PC-9 (cell line): ENCODE measurements at regions of chr17 and their contacts with region 1.

Region 1: GRCh38 chr17:56592487-56593085 is 913 bp upstream of the NOG start:
- DNase-seq: peak; percentile 73 to 76
- H3K4me3 ChIP-seq: peak overlapping the region; percentile 97
- H3K27ac ChIP-seq: no peak overlapping the region
- H3K4me1 ChIP-seq: peaks cover 5% of the 10 kb centered on the region
- H3K27me3 ChIP-seq: no peaks in the 10 kb centered on the region
- CTCF ChIP-seq: peak; percentile 81

Region 2: GRCh38 chr17:56653877-56654276 is 61.3 kb after region 1 on chr17:
- CTCF ChIA-PET with region 1: no interaction called
- POLR2A ChIA-PET with region 1: no interaction called
- intact Hi-C with region 1: loop called (anchors 1 kb)
- DNase-seq: peak; percentile 31 to 75
- H3K4me3 ChIP-seq: no peak overlapping the region
- H3K27ac ChIP-seq: no peak overlapping the region
- H3K4me1 ChIP-seq: peaks cover 26% of the 10 kb centered on the region
- H3K27me3 ChIP-seq: no peaks in the 10 kb centered on the region
- CTCF ChIP-seq: peak; percentile 90

Region 3: GRCh38 chr17:56699186-56699895 is 106.8 kb after region 1 on chr17:
- CTCF ChIA-PET with region 1: interaction called, 9 read pairs
- POLR2A ChIA-PET with region 1: no interaction called
- intact Hi-C with region 1: loop called (anchors 2 kb)
- DNase-seq: peak; percentile 94 to 100
- H3K4me3 ChIP-seq: peak overlapping the region; percentile 26; the same call in 1 of the 2 replicates
- H3K27ac ChIP-seq: peak overlapping the region; percentile 81
- H3K4me1 ChIP-seq: peaks cover 41% of the 10 kb centered on the region
- H3K27me3 ChIP-seq: no peaks in the 10 kb centered on the region
- CTCF ChIP-seq: no peak

Region 4: GRCh38 chr17:56779898-56780733 is 187.5 kb after region 1 on chr17:
- CTCF ChIA-PET with region 1: no interaction called
- POLR2A ChIA-PET with region 1: no interaction called
- intact Hi-C with region 1: loop called (anchors 1 kb)
- DNase-seq: peak; percentile 64 to 87
- H3K4me3 ChIP-seq: peak overlapping the region; percentile 66
- H3K27ac ChIP-seq: no peak overlapping the region
- H3K4me1 ChIP-seq: peaks cover 30% of the 10 kb centered on the region
- H3K27me3 ChIP-seq: no peaks in the 10 kb centered on the region
- CTCF ChIP-seq: peak; percentile 99

Region 5: GRCh38 chr17:56939901-56940343 is 347.3 kb after region 1 on chr17:
- CTCF ChIA-PET with region 1: no interaction called
- POLR2A ChIA-PET with region 1: no interaction called
- intact Hi-C with region 1: loop called (anchors 5 kb)
- DNase-seq: peak; percentile 2 to 59
- H3K4me3 ChIP-seq: no peak overlapping the region
- H3K27ac ChIP-seq: no peak overlapping the region
- H3K4me1 ChIP-seq: peaks cover 19% of the 10 kb centered on the region
- H3K27me3 ChIP-seq: no peaks in the 10 kb centered on the region
- CTCF ChIP-seq: peak; percentile 95